ENCODE measurements at regions of chr19 and their contacts with region 1.

Region 1: GRCh38 chr19:56567274-56568120 is at the start of gene ZNF470:
- DNase-seq: peak; percentile 71 to 92 (median 86)
- ATAC-seq: peak; percentile 97
- H3K4me3 ChIP-seq: peak within 1 kb of the TSS; percentile 81 to 97
- H3K4me3 Mint-ChIP-seq: peak within 1 kb of the TSS; percentile 98
- H3K27ac ChIP-seq: peak within 1 kb of the TSS; percentile 52 to 61
- H3K27ac Mint-ChIP-seq: peak within 1 kb of the TSS; percentile 84
- H3K4me1 ChIP-seq: peaks cover 6% of the 10 kb centered on the region
- H3K4me1 Mint-ChIP-seq: peaks cover 22% of the 10 kb centered on the region
- H3K27me3 ChIP-seq: no peaks in the 10 kb centered on the region
- H3K27me3 Mint-ChIP-seq: no peaks in the 10 kb centered on the region
- CTCF ChIP-seq: no peak
- total RNA-seq, gene ZNF470: 0.33 to 1.1 TPM

Region 2: GRCh38 chr19:56403764-56404704 is 163.5 kb before region 1 on chr19 and contains the start of gene ZNF583:
- CTCF ChIA-PET with region 1: no interaction called
- POLR2A ChIA-PET with region 1: no interaction called
- intact Hi-C with region 1: loop called in 1 of 2 experiments (anchors 1 kb)
- DNase-seq: peak; percentile 83 to 95 (median 91)
- ATAC-seq: peak; percentile 82
- H3K4me3 ChIP-seq: peak within 1 kb of the TSS; percentile 80 to 93
- H3K4me3 Mint-ChIP-seq: peak within 1 kb of the TSS; percentile 85
- H3K27ac ChIP-seq: peak within 1 kb of the TSS; percentile 83 to 99
- H3K27ac Mint-ChIP-seq: peak within 1 kb of the TSS; percentile 88
- H3K4me1 ChIP-seq: peaks cover 18% of the 10 kb centered on the region
- H3K4me1 Mint-ChIP-seq: peaks cover 32% of the 10 kb centered on the region
- H3K27me3 ChIP-seq: no peaks in the 10 kb centered on the region
- H3K27me3 Mint-ChIP-seq: no peaks in the 10 kb centered on the region
- CTCF ChIP-seq: no peak
- total RNA-seq, gene ZNF583: 1.3 to 2.4 TPM

Region 3: DNA sequence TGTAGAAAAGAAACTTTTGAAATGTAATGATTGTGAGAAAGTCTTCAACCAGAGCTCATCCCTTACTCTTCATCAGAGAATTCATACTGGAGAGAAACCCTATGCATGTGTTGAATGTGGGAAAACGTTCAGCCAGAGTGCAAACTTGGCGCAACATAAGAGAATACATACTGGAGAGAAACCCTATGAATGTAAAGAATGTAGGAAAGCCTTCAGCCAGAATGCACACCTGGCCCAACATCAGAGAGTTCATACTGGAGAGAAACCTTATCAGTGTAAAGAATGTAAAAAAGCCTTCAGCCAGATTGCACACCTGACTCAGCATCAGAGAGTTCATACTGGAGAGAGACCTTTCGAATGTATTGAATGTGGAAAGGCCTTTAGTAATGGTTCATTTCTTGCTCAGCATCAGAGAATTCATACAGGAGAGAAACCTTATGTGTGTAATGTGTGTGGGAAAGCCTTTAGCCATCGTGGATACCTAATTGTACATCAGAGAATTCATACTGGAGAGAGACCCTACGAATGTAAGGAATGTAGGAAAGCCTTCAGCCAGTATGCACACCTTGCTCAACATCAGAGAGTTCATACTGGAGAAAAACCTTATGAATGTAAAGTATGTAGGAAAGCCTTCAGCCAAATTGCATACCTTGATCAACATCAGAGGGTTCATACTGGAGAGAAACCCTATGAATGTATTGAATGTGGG is 144.1 kb before region 1 on chr19:
- CTCF ChIA-PET with region 1: no interaction called
- POLR2A ChIA-PET with region 1: no interaction called
- intact Hi-C with region 1: no loop called
- DNase-seq: no peak
- ATAC-seq: no peak
- H3K4me3 ChIP-seq: peak overlapping the region in 1 of 2 experiments; percentile 3
- H3K4me3 Mint-ChIP-seq: no peak overlapping the region
- H3K27ac ChIP-seq: no peak overlapping the region
- H3K27ac Mint-ChIP-seq: no peak overlapping the region
- H3K4me1 ChIP-seq: no peaks in the 10 kb centered on the region
- H3K4me1 Mint-ChIP-seq: no peaks in the 10 kb centered on the region
- H3K27me3 ChIP-seq: no peaks in the 10 kb centered on the region
- H3K27me3 Mint-ChIP-seq: no peaks in the 10 kb centered on the region
- CTCF ChIP-seq: no peak

Region 4: DNA sequence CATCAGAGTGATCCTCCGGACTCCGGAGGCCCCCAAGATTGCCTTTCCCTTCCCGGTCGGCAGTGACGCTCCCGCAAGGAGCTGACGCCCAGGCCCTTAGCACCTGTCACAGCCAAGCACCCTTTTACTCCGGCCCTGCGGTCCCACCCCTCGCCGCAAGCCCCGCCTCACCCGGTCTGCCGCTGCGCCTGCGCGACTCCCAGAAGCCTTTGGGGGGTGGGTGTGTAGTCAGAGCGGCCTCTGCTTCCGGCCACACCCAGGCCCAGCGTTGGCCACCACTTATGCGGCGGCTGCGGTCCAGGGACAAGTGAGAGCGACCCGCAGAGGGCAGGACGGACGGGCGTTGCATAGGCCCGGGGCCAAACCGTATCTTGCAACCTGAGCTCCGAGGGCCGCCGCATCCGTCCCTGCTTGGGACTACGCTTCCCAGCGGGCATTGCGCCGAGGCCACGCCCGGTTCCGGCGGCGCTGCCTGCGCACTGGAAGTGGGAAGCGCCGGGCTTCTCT is 29.2 kb before region 1 on chr19:
- CTCF ChIA-PET with region 1: no interaction called
- POLR2A ChIA-PET with region 1: no interaction called
- intact Hi-C with region 1: loop called (anchors 1 to 2 kb)
- DNase-seq: peak; percentile 73 to 92 (median 89)
- ATAC-seq: peak; percentile 90
- H3K4me3 ChIP-seq: peak overlapping the region; percentile 71 to 95
- H3K4me3 Mint-ChIP-seq: peak overlapping the region; percentile 92
- H3K27ac ChIP-seq: peak overlapping the region; percentile 72 to 87
- H3K27ac Mint-ChIP-seq: peak overlapping the region; percentile 95
- H3K4me1 ChIP-seq: peaks cover 12% of the 10 kb centered on the region
- H3K4me1 Mint-ChIP-seq: peaks cover 22% of the 10 kb centered on the region
- H3K27me3 ChIP-seq: no peaks in the 10 kb centered on the region
- H3K27me3 Mint-ChIP-seq: no peaks in the 10 kb centered on the region
- CTCF ChIP-seq: no peak

Region 5: GRCh38 chr19:56671613-56671994 is 104.1 kb after region 1 on chr19 and contains the start of gene ZNF835:
- CTCF ChIA-PET with region 1: no interaction called
- POLR2A ChIA-PET with region 1: no interaction called
- intact Hi-C with region 1: loop called in 1 of 2 experiments (anchors 1 kb)
- DNase-seq: peak; percentile 46 to 86 (median 79)
- ATAC-seq: peak; percentile 92
- H3K4me3 ChIP-seq: peak within 1 kb of the TSS; percentile 29 to 66
- H3K4me3 Mint-ChIP-seq: peak within 1 kb of the TSS; percentile 90
- H3K27ac ChIP-seq: peak within 1 kb of the TSS in 1 of 2 experiments; percentile 30
- H3K27ac Mint-ChIP-seq: peak within 1 kb of the TSS; percentile 67
- H3K4me1 ChIP-seq: peaks cover 11% of the 10 kb centered on the region
- H3K4me1 Mint-ChIP-seq: peaks cover 12% of the 10 kb centered on the region
- H3K27me3 ChIP-seq: no peaks in the 10 kb centered on the region
- H3K27me3 Mint-ChIP-seq: no peaks in the 10 kb centered on the region
- CTCF ChIP-seq: no peak
- total RNA-seq, gene ZNF835: 0.46 to 0.75 TPM

Region 6: DNA sequence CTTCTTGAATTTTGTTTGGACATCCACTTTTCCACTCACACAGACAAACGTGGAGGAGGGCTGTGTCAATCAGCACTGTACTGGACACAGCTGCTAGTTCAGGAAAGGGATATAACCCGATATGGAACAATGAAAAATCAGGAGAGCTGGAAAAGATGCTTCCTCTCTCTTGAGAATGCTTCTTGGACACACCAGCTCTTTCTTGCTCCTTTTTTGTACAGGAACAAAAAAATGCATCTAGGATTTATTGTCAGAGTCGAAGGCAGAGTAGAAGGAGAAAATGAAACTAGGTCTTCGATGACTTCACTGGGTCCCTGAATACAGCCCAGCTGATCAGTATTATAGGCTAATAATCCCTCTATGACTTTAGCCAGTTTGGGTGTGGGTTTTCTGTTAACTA is 210.9 kb after region 1 on chr19:
- CTCF ChIA-PET with region 1: no interaction called
- POLR2A ChIA-PET with region 1: no interaction called
- intact Hi-C with region 1: no loop called
- DNase-seq: no peak
- ATAC-seq: no peak
- H3K4me3 ChIP-seq: no peak overlapping the region
- H3K4me3 Mint-ChIP-seq: no peak overlapping the region
- H3K27ac ChIP-seq: no peak overlapping the region
- H3K27ac Mint-ChIP-seq: no peak overlapping the region
- H3K4me1 ChIP-seq: no peaks in the 10 kb centered on the region
- H3K4me1 Mint-ChIP-seq: no peaks in the 10 kb centered on the region
- H3K27me3 ChIP-seq: no peaks in the 10 kb centered on the region
- H3K27me3 Mint-ChIP-seq: no peaks in the 10 kb centered on the region
- CTCF ChIP-seq: no peak

Measured in CD8-positive, alpha-beta T cell (primary cell).